ENCODE measurements at regions of chr9 and their contacts with region 1.

Region 1: DNA sequence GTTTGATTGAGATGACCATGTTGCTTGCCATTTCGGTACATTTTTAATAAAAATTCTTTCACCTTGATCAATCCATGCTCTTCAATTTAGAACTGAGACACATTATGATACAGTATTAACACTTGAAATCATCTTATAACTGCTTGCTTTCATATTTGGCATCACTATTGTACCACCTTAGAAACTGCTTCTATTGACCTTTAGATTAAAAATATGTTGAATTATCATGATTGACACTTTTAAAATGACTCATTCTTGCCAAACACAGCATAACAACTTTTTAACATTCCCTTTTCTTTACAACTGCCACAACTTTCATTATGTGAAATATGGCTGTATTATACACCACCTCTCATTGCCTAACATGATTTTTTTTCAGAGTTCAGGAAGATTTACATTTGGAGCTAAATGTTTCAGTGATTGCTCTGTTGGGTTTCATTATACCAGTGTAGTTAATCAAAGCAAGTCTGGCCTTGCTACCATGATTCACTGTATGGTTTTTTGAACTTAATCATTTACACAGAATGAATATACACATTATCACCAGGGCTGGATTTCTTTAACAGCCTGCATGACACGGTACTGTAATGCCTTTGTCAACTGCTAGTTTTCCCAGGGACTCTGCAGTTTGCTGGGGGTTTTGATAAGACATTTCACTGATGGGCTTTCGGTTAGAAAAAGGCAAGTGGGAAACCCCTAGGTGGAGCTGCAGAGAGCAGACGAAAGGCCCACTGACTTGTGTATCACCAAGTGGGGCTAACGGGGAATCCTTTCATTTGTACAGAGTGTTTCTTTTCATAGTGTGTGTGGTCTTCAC is 93.6 kb upstream of the TLE4 start:
- DNase-seq: no peak
- ATAC-seq: peak; percentile 96
- H3K4me3 ChIP-seq: no peak overlapping the region
- H3K27ac ChIP-seq: no peak overlapping the region
- H3K4me1 ChIP-seq: no peaks in the 10 kb centered on the region
- H3K27me3 ChIP-seq: no peaks in the 10 kb centered on the region
- CTCF ChIP-seq: peak; percentile 43 to 63 (median 57); a peak in 5 of 6 replicates
- EP300 ChIP-seq: no peak
- POLR2A ChIP-seq: no peak
- RAD21 ChIP-seq: peak; percentile 60

Region 2: GRCh38 chr9:79461712-79462111 is 16.5 kb before region 1 on chr9:
- CTCF ChIA-PET with region 1: no interaction called
- POLR2A ChIA-PET with region 1: no interaction called
- RAD21 ChIA-PET with region 1: no interaction called
- SMC1A ChIA-PET with region 1: no interaction called
- in situ Hi-C with region 1: no loop called
- intact Hi-C with region 1: no loop called
- DNase-seq: no peak
- ATAC-seq: no peak
- H3K4me3 ChIP-seq: no peak overlapping the region
- H3K27ac ChIP-seq: no peak overlapping the region
- H3K4me1 ChIP-seq: no peaks in the 10 kb centered on the region
- H3K27me3 ChIP-seq: no peaks in the 10 kb centered on the region
- CTCF ChIP-seq: no peak
- EP300 ChIP-seq: no peak
- POLR2A ChIP-seq: no peak
- RAD21 ChIP-seq: no peak

Region 3: DNA sequence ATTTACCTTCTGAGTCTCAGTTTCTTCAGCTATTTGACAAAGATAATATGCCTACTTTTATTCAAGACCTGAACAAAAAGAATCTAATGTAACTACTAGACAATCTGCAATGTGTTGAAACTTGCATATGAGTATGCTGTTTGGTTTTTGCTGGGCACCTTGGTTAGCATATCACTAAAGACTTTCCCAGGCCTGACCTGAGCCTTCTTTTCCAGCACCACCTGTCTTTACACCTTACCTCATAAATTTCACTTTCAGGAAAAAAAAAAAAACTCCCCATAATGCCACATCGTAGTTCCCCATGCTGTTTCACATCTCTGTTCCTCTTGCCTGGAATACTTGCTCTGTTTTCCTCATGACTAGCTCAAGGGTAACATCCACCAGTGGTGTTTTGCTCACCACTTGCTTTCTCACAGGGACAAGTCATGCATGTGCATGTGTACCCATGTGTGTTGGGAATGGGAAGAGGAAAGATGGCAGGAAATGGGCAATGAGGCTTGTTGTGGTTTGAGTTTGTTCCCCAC is 48.0 kb after region 1 on chr9:
- CTCF ChIA-PET with region 1: no interaction called
- POLR2A ChIA-PET with region 1: no interaction called
- RAD21 ChIA-PET with region 1: no interaction called
- SMC1A ChIA-PET with region 1: interaction called, 3 read pairs
- in situ Hi-C with region 1: no loop called
- intact Hi-C with region 1: loop called (anchors 5 kb)
- DNase-seq: peak; percentile 11
- ATAC-seq: peak; percentile 67
- H3K4me3 ChIP-seq: no peak overlapping the region
- H3K27ac ChIP-seq: no peak overlapping the region
- H3K4me1 ChIP-seq: peaks cover 3% of the 10 kb centered on the region; the same call in 1 of the 2 replicates
- H3K27me3 ChIP-seq: no peaks in the 10 kb centered on the region
- CTCF ChIP-seq: no peak
- EP300 ChIP-seq: no peak
- POLR2A ChIP-seq: no peak
- RAD21 ChIP-seq: no peak

Region 4: GRCh38 chr9:79565245-79565644 is 87.1 kb after region 1 on chr9:
- CTCF ChIA-PET with region 1: interaction called, 10 read pairs
- POLR2A ChIA-PET with region 1: interaction called, 4 read pairs
- RAD21 ChIA-PET with region 1: interaction called, 4 read pairs
- SMC1A ChIA-PET with region 1: interaction called, 4 read pairs
- in situ Hi-C with region 1: no loop called
- intact Hi-C with region 1: loop called (anchors 1 kb)
- DNase-seq: peak; percentile 42
- ATAC-seq: peak; percentile 82
- H3K4me3 ChIP-seq: no peak overlapping the region
- H3K27ac ChIP-seq: no peak overlapping the region
- H3K4me1 ChIP-seq: peaks cover 23% of the 10 kb centered on the region
- H3K27me3 ChIP-seq: no peaks in the 10 kb centered on the region
- CTCF ChIP-seq: no peak
- EP300 ChIP-seq: 0 out of 4 replicates have a peak, but pooled peaks of 1 of the 2 experiments have one; percentile 19
- POLR2A ChIP-seq: no peak
- RAD21 ChIP-seq: no peak

Region 5: DNA sequence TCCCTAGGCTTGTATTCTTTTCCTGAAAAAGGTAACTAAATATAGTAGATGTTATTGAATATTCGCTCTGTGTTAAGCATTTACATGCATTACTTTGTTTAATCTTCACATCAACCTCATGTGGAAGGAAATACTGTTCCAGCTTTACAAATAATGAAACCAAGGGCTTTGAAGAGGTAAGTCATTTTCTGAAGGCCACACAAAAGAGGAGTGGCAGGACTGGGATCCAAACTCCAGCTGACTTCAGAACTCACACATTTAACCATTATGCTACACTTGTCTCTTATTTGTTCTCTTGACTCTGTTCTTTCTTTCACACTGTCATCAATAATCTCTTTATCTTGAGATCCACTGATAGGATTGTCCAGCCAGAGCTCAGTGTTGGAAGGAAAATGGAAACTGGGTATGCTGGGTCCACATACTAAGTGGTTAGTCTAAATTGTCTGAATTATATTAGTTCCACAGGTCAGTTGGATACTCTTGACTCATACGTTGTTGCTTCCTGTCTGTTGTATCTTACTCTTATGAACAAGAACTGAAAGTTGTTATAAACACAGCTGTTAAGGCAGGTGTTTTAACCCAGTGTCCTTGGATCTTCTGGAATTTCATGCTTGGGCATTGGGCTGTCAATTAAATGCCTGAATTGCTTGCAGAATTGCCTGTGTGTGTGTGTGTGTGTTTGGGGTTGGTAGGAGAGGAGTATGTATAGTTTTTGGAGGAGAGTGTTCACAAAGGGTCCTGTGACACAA is 159.2 kb after region 1 on chr9:
- CTCF ChIA-PET with region 1: interaction called, 3 read pairs
- POLR2A ChIA-PET with region 1: no interaction called
- RAD21 ChIA-PET with region 1: no interaction called
- SMC1A ChIA-PET with region 1: interaction called, 4 read pairs
- in situ Hi-C with region 1: no loop called
- intact Hi-C with region 1: loop called (anchors 10 kb)
- DNase-seq: no peak
- ATAC-seq: peak; percentile 60
- H3K4me3 ChIP-seq: no peak overlapping the region
- H3K27ac ChIP-seq: no peak overlapping the region
- H3K4me1 ChIP-seq: no peaks in the 10 kb centered on the region
- H3K27me3 ChIP-seq: no peaks in the 10 kb centered on the region
- CTCF ChIP-seq: no peak
- EP300 ChIP-seq: no peak
- POLR2A ChIP-seq: no peak
- RAD21 ChIP-seq: no peak

Region 6: GRCh38 chr9:79731171-79731890 is 253.2 kb after region 1 on chr9:
- CTCF ChIA-PET with region 1: no interaction called
- POLR2A ChIA-PET with region 1: no interaction called
- RAD21 ChIA-PET with region 1: no interaction called
- SMC1A ChIA-PET with region 1: no interaction called
- in situ Hi-C with region 1: no loop called
- intact Hi-C with region 1: loop called (anchors 5 kb)
- DNase-seq: peak; percentile 13
- ATAC-seq: peak; percentile 91
- H3K4me3 ChIP-seq: no peak overlapping the region
- H3K27ac ChIP-seq: no peak overlapping the region
- H3K4me1 ChIP-seq: 0 out of 2 replicates have a peak, but pooled peaks cover 3% of the 10 kb centered on the region
- H3K27me3 ChIP-seq: no peaks in the 10 kb centered on the region
- CTCF ChIP-seq: no peak
- EP300 ChIP-seq: no peak
- POLR2A ChIP-seq: no peak
- RAD21 ChIP-seq: no peak

Measured in GM12878 (cell line).